ENCODE measurements at regions of chr2 and their contacts with region 1.

Region 1: DNA sequence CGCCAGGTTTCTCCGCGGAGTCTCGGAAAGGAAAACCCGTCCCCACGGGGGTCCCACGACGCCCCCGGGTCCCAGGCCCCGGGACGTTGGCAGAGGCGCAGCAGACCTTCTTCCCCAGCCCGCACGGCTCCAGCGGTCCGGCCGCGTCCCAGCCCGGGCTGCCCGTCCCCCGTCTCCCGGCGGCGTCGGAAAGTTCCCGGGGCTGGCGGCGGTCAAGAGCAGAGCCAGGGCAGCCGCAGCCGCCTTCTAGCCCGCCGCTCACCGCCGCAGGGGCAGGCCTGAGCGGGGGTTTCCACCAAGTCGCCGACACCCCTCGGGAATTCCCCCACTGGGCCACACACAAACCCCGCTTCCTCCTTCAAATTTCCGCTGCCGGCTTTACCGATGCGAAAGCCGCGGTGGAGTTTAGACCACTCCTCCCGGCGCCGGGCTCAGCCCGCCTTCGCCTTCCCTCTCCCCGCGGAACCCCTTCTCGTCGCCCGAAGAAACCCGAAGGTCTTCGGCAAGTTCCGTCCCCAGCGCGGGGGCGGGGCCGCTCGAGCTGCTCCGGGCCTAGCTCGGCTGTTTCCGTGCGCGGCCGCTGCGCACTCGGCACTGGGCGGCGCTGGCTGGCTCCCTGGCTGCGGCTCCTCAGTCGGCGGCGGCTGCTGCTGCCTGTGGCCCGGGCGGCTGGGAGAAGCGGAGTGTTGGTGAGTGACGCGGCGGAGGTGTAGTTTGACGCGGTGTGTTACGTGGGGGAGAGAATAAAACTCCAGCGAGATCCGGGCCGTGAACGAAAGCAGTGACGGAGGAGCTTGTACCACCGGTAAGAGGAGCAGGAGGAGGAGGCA is at the start of gene CREB1:
- DNase-seq: peak; percentile 100
- H3K4me3 Mint-ChIP-seq: peak within 1 kb of the TSS; percentile 93
- H3K27ac Mint-ChIP-seq: peak within 1 kb of the TSS; percentile 99
- H3K4me1 Mint-ChIP-seq: peaks cover 50% of the 10 kb centered on the region
- H3K27me3 Mint-ChIP-seq: no peaks in the 10 kb centered on the region
- total RNA-seq, gene CREB1: 106 and 107 TPM in 2 replicates

Region 2: DNA sequence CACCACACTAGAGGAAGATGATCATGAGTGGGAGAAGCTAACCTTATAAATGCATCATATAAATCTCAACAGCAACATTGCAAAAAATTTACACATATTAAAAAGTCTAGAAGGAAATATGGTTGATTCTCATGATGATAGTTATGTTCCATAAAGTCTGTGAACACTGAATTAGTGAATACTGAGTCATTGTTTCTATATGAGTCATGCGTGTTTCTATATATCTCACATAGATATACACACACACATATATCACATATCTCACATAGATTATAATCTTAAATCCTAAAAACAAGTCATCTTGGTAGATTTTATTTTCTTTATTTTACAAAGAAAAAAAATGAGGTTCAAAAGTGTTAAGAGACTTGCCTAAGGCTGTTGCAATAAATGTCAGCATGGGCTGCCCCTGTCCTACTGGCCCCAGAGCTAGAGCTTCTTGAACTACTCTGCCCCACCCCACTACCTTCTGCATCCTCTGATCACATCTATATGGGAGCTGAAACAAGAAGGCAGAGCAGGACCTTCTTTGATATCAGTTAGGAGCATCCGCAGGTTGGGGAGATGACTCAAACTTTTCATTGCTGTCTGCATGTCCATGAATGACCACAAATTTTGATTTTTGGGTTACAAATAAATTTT is 1168.0 kb before region 1 on chr2:
- intact Hi-C with region 1: loop called (anchors 10 kb)
- DNase-seq: peak; percentile 55
- H3K4me3 Mint-ChIP-seq: no peak overlapping the region
- H3K27ac Mint-ChIP-seq: peak overlapping the region; percentile 36
- H3K4me1 Mint-ChIP-seq: no peaks in the 10 kb centered on the region
- H3K27me3 Mint-ChIP-seq: peaks cover 2% of the 10 kb centered on the region

Region 3: GRCh38 chr2:207334624-207335371 is 194.7 kb before region 1 on chr2:
- intact Hi-C with region 1: loop called (anchors 5 kb)
- DNase-seq: peak; percentile 68
- H3K4me3 Mint-ChIP-seq: peak overlapping the region; percentile 52
- H3K27ac Mint-ChIP-seq: peak overlapping the region; percentile 86
- H3K4me1 Mint-ChIP-seq: peaks cover 68% of the 10 kb centered on the region
- H3K27me3 Mint-ChIP-seq: no peaks in the 10 kb centered on the region

Region 4: GRCh38 chr2:207513551-207514257 is 15.8 kb before region 1 on chr2:
- intact Hi-C with region 1: loop called (anchors 1 kb)
- DNase-seq: no peak
- H3K4me3 Mint-ChIP-seq: peak overlapping the region; percentile 1
- H3K27ac Mint-ChIP-seq: peak overlapping the region; percentile 11
- H3K4me1 Mint-ChIP-seq: peaks cover 32% of the 10 kb centered on the region
- H3K27me3 Mint-ChIP-seq: peaks cover 6% of the 10 kb centered on the region

Region 5: DNA sequence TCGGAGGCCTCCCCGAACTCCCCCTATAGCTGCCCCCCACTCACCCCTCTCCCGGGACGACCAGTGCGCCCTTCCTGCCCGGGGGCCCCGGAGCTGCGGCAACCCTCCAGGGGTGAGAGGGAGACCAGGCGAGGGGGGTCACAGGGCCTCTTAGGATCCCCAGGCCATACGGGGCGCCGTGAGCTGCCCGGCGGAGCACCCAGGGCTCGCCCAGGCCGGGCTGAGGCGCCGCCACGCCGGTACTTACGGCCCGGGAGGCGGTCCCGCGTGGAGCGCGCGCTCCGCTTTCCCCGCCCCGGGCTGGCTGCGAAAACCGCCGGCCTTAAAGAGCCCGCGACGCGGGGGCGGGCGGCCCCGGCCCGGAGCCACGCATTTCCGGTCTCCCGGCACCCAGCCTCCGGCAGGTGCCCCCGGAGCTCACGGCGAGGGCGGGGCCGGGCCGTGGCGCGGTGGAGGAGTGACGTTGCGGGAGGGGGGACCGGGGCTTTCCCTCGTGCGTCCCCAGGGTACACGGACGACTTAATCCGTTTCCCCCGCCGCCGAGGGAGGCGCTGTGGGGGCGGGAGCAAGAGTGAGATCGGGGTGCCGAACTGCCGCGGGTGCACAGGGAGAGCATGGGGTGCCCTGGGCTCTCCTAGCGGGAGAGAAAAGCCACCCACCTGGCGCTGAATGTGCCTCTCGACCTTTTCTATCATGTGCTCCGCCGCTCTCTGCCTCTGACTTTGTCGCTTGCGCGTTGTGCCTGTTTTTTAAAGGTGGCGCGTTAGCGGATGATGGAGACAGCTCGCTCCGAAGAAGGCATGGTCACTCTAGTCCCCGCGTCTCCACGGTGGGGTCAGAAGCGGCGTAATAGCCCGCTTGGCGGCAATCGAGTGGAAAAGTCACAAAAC is 95.7 kb after region 1 on chr2 and contains the start of gene METTL21A:
- intact Hi-C with region 1: loop called (anchors 1 kb)
- DNase-seq: peak; percentile 98
- H3K4me3 Mint-ChIP-seq: peak within 1 kb of the TSS; percentile 95
- H3K27ac Mint-ChIP-seq: peak within 1 kb of the TSS; percentile 98
- H3K4me1 Mint-ChIP-seq: peaks cover 32% of the 10 kb centered on the region
- H3K27me3 Mint-ChIP-seq: no peaks in the 10 kb centered on the region
- total RNA-seq, gene METTL21A: 37.9 and 42.6 TPM in 2 replicates

Region 6: DNA sequence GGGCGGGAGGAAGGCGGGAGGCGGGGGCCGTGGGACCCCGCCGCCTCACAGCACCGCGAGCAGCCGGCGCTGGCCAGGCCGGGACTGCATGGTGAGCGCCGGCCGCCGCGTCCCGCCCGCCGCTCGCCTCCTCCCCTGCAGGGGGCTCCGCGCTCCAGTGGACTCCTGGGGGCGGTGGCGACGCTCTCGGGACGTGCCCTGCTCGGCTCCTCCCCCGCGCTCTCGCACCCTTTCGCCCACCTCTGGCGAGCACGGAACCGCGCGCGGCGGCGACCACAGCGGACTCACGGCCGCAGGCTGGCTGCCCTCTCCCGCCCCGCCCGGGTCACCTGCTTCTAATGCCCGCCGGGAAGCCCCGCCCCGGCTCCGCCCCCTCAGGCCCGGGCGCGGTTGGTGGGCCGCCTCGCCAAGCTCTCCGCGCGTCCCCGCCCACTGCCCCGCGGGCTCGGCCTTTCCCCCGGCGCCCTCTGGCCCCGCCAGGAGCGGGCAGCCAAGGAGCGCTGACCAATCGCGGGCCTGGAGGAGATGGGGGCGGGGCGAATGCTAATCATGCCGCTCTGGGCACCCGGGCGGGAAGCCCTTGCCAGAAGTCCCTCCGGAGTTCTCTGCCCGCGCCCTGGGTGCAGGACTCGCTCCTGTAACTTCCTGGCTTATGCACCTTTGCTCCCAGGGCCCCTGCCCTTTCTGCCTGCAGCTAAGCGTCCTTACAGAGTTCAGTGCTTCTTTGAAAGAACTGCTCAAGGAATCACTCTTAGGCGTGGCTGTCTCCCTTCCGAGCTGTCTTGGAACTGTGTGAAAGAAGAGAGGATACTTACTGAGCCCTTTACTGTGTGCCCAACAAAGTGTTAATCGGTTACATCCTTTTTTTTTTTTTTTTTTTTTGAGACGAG is 240.3 kb after region 1 on chr2 and contains the start of gene FZD5:
- intact Hi-C with region 1: loop called (anchors 5 kb)
- DNase-seq: peak; percentile 94
- H3K4me3 Mint-ChIP-seq: peak within 1 kb of the TSS; percentile 89
- H3K27ac Mint-ChIP-seq: peak within 1 kb of the TSS; percentile 41
- H3K4me1 Mint-ChIP-seq: peaks cover 23% of the 10 kb centered on the region
- H3K27me3 Mint-ChIP-seq: peaks cover 61% of the 10 kb centered on the region
- total RNA-seq, gene FZD5: 0.75 and 1.1 TPM in 2 replicates

Region 7: DNA sequence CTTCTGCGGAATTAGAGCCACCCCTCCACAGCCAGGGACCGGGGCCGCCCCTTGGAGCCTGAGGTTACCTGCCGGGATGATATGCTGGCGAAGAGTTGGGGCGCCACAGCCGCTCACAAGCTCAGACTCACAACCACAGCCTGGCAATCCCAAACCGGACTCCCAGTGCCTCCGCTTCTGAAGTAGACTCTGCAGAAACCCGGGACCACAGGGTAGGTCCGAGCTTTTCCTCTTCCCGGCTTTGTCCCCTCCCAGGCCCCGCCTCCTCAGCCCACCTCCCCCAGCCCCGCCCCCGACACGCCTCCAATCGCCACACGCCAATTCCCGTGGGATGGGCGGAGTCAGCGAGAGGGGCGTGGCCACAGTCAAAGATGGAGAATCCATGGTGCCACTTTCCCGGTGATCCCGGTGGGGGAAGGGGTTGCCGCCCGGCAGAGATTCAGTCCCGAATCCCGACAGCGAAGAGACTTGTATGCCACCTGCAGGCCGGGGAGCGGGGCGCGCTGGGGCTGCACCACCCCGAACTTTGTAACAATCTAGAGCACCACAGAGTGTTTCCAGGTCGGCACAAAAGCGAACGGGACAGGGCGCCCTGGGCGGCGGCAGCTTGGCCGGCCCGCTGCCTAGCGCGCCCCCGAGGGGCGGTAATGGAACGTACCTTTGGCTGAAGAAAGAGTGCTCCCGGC is 725.5 kb after region 1 on chr2 and contains the start of gene IDH1:
- intact Hi-C with region 1: loop called (anchors 5 kb)
- DNase-seq: peak; percentile 98
- H3K4me3 Mint-ChIP-seq: peak within 1 kb of the TSS; percentile 97
- H3K27ac Mint-ChIP-seq: peak within 1 kb of the TSS; percentile 81
- H3K4me1 Mint-ChIP-seq: peaks cover 20% of the 10 kb centered on the region
- H3K27me3 Mint-ChIP-seq: peaks cover 5% of the 10 kb centered on the region
- total RNA-seq, gene IDH1: 25.4 and 26.0 TPM in 2 replicates